Mucosa of descending colon (tissue), 3 donors: ENCODE measurements at regions of chr7 and their contacts with region 1.

Region 1: DNA sequence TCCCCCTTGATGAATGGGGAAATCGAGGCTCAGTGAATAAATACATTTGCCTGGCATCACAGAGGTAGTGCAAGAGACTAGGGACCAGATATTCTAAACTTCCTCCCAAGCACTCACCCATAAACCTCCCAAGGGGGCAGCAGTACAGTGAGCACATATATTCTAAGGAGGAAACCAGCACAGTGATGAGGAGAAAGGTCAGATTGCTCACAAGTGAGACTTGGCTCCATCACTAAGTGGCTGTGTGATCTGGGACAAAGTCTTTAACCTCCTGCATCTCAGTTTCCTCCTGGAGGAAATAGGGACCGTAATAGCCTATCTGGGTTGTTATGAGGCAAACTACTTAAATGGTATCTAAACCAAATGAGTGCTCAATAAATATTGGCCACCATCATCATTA is 4.3 kb downstream of the PLXNA4 start:
- DNase-seq: no peak
- ATAC-seq: no peak
- H3K4me3 ChIP-seq: no peak overlapping the region
- H3K4me1 ChIP-seq: peaks cover 11% of the 10 kb centered on the region
- CTCF ChIP-seq: no peak

Region 2: DNA sequence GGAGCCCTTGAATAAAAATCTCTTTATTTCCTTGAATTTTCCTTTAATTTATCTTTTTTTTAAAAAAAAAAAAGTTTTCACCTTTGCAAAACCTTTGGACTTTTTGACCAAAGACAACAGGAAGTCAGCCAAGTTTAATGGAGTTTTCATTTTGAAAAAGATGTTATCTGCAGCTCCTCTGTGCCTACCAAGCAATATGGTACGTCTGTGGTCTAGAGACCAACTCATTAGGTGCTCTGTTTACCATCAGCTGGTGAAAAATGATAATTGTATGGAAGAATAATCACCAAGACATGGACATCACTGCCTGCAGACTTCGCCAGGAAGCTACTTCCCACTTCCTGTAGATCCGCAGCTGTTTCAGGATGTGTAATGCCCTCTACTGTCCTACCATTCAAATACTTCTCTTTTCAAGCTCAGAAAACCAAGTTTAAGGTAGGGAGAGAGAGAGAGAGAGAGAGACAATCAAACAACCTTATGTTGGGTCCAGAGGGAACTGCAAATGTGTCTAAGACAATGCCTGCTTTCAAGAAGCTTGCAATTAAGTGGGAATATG is 14.4 kb before region 1 on chr7:
- intact Hi-C with region 1: loop called in 1 of 2 experiments (anchors 1 kb)
- DNase-seq: no peak
- ATAC-seq: no peak
- H3K4me3 ChIP-seq: no peak overlapping the region
- H3K4me1 ChIP-seq: no peaks in the 10 kb centered on the region
- CTCF ChIP-seq: no peak